ENCODE measurements at regions of chr6 and their contacts with region 1.

Region 1: DNA sequence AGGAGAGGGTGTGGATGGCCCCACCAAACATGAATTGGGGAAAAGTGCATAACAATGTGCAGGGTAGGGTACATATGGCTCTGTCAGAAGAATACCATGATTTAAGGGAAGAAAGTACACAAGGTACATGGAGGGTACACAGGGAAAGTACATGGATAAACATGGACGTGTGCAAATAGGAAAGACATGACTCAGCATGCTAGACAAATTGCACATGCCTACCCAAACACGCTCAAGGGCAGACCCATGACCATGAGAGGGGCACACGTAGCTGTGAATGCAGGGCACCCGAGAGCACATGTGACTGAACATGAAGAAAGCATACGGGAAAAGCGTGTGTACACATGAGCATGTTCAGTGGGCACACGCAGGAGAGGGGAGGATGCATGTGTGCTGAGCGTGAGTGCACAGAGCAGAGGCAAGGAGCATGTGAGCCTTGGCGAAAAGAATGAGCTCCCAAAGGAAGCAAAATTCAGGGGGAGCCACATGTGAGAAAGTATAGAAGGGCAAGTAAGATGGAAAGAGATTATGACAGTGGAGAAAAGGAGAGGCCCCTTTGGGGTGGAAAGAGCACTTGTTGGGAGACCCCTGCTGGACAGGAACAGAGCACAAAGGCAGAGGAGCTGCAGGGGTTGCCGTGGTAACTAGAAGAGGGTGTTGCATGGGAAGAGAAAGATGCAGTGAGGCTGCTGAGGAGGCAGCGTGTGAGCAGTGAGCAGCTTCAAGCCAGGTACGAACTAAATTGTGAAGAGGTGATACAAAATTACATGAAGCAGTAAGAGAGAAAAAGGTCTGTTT is 17.8 kb downstream of the OR2H2 start:
- DNase-seq: peak; percentile 58
- H3K4me3 ChIP-seq: no peak overlapping the region
- H3K27ac ChIP-seq: no peak overlapping the region
- H3K4me1 ChIP-seq: no peaks in the 10 kb centered on the region
- H3K27me3 ChIP-seq: no peaks in the 10 kb centered on the region
- CTCF ChIP-seq: peak; percentile 36; the same call in 1 of the 2 replicates

Region 2: DNA sequence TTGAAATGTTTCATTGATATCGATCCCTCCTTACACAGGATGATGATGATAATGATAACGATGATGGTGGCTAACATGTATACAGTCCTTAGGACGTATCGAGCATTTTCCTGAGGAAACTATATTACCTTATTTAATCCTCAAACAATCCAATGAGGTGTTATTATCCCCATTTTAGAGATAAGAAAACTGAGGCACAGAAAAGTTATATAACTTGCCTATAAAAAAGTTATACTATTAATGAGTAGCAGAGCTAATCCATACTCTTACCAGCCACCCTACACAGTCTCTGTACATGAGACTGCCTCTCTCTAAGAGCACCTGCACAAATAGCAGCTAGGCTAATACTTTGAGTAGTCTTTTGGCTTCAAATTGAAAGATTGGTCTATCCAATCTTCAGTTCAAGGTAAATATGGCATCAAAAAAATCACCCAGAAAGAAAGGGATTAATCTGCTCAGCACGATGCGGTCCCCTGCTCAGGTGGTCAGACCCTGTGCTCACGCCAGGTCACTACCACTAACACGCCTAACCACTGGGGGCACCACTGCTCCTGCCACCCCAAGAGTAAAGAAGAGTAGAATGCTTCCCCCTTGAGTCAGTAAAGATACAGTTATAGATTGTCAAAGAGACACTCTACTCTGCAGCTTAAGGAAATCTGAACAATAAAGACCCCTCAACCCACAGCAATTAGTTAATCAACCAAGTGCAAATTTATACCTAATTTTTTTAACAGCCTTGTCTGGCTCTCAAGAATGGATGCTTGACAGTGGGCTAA is 15.2 kb after region 1 on chr6:
- CTCF ChIA-PET with region 1: interaction called, 13 read pairs
- POLR2A ChIA-PET with region 1: no interaction called
- intact Hi-C with region 1: no loop called
- DNase-seq: no peak
- H3K4me3 ChIP-seq: no peak overlapping the region
- H3K27ac ChIP-seq: no peak overlapping the region
- H3K4me1 ChIP-seq: no peaks in the 10 kb centered on the region
- H3K27me3 ChIP-seq: no peaks in the 10 kb centered on the region
- CTCF ChIP-seq: peak; percentile 32; the same call in 1 of the 2 replicates

Region 3: DNA sequence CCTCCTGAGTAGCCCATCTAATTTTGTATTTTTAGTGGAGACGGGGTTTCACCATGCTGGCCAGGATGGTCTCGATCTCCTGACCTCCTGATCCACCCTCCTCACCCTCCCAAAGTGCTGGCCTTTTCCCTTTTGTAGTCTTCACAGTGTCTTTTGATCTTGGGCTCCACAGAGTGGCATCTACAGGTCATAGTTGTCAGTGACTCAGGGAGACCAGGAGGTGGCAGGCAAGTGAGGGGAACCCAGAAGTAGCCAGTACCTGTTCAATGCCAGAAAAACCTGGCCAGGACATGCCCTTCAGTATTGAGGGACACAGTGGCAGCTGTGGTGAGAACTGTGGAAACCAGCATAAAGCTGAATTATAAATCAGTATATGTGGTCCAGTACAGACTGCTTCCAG is 761.8 kb after region 1 on chr6:
- CTCF ChIA-PET with region 1: no interaction called
- POLR2A ChIA-PET with region 1: no interaction called
- intact Hi-C with region 1: no loop called
- DNase-seq: no peak
- H3K4me3 ChIP-seq: no peak overlapping the region
- H3K27ac ChIP-seq: no peak overlapping the region
- H3K4me1 ChIP-seq: no peaks in the 10 kb centered on the region
- H3K27me3 ChIP-seq: peaks cover 69% of the 10 kb centered on the region
- CTCF ChIP-seq: no peak

Measured in A673 (cell line).